ENCODE measurements at regions of chr17 and their contacts with region 1.

Region 1: GRCh38 chr17:76384222-76384986 is at the start of gene SPHK1:
- H3K4me3 Mint-ChIP-seq: peak within 1 kb of the TSS; percentile 76
- H3K27ac Mint-ChIP-seq: peak within 1 kb of the TSS; percentile 75
- H3K4me1 Mint-ChIP-seq: peaks cover 54% of the 10 kb centered on the region
- H3K27me3 Mint-ChIP-seq: no peaks in the 10 kb centered on the region

Region 2: DNA sequence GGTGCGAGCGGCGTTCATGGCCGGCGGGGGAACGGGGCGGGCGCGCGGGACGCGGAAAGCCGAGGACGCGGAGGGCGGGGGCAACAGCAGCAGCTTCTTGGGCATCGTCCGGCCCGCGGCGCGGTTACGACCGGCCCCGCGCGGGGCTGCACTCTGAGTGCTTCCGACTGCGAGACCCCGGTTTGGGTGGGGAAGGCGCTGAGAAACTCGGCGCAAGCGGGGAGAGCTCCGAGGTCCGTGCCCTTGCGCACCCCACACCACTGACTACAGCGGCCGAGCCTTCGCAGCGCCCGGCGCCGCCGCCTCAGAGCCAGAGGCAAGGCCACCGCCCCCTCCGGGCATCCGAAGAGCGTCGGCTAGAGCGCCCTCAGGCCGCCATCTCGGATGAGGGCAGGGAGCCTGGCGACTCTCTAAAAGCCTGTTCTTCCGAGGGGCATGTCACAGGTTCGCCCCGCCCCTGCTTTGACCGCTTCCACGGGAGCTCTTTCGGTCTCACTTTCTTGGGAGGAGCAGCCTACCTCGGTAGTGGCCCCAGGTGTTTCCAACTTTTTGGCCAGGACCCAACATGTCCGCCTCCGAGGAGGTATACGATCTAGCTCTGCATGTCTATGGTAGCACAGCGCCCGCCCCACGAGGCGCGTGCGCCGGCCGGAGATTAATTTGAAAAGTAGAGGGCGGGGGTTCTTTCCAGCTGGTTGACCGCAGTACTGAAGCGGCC is 30.6 kb before region 1 on chr17 and contains the start of gene PRPSAP1:
- intact Hi-C with region 1: loop called (anchors 2 kb)
- H3K4me3 Mint-ChIP-seq: peak within 1 kb of the TSS; percentile 86
- H3K27ac Mint-ChIP-seq: peak within 1 kb of the TSS; percentile 99
- H3K4me1 Mint-ChIP-seq: peaks cover 26% of the 10 kb centered on the region
- H3K27me3 Mint-ChIP-seq: peaks cover 11% of the 10 kb centered on the region

Region 3: GRCh38 chr17:76414334-76415295 is 30.2 kb after region 1 on chr17:
- intact Hi-C with region 1: no loop called
- H3K4me3 Mint-ChIP-seq: no peak overlapping the region
- H3K27ac Mint-ChIP-seq: no peak overlapping the region
- H3K4me1 Mint-ChIP-seq: peaks cover 11% of the 10 kb centered on the region
- H3K27me3 Mint-ChIP-seq: no peaks in the 10 kb centered on the region

Region 4: DNA sequence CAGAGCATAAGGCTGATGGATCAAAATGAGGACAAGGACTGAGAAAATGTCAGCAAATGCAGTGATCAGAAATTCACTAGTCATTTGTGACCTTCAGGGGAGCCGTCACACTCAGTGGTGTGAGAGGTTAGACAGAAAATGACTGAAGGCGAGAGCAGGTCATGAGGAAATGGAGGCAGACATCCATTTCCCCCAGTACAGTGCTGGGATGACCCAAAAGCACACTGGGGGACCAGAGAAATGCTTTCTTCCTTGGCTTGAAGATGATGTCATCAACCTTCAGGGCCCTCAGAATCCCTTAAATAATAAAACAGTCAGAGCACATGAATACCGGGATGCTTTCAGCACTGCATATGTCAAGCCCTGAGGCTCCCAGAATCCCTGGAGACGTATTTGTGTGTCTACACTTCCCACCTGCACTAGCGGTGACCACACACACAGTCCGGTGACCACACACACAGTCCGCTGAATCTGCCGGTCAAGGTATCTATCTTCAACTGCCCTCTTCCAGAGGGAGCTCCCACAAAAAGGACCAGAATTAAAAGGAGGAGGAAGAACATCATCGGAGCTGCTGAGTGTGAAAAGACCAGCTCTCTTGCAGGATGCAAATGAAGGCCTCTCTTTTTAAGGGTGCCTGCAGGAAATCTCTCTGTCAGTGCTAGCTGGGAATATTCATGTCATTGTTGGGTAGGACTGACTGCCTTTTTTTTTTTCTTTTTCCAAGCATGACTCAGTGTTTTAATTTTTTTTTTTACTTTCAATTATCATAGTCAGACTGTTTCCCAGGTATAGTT is 60.3 kb after region 1 on chr17:
- intact Hi-C with region 1: no loop called
- H3K4me3 Mint-ChIP-seq: no peak overlapping the region
- H3K27ac Mint-ChIP-seq: no peak overlapping the region
- H3K4me1 Mint-ChIP-seq: peaks cover 56% of the 10 kb centered on the region
- H3K27me3 Mint-ChIP-seq: no peaks in the 10 kb centered on the region

Region 5: DNA sequence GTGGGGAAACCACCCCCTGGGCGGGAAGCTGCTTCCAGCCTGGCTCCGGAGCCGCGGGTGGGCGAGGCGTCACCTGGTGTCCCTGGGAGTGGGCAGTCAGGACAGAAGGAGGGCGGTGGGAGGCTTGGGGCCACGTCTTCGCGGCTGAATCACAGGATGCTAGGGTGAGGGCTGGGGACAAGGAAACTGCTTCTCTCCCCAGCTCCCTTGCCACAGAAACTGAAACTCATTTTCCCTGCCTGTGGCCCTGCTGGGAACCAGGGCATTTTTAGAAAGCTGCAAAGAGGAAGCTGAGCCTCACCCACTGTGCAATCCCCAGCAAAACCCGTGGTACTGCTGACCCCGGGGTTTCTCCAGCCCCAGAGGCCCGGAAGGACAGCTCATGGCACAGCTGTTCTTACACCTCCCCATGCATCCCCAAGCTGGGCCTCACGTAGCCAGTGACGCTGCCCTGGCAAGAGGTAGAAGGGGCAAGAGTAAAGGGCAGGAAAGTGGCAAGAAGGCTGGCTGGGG is 108.6 kb after region 1 on chr17:
- intact Hi-C with region 1: loop called (anchors 10 kb)
- H3K4me3 Mint-ChIP-seq: peak overlapping the region; percentile 53
- H3K27ac Mint-ChIP-seq: peak overlapping the region; percentile 91
- H3K4me1 Mint-ChIP-seq: peaks cover 87% of the 10 kb centered on the region
- H3K27me3 Mint-ChIP-seq: no peaks in the 10 kb centered on the region

Measured in dendritic cell treated with granulocyte-macrophage colony-stimulating factor and Interleukin-4, amounts not matched to agents 40 ng/mL and 50 ng/mL, for 4 days (primary cell).